Posterior vena cava (tissue), 2 donors: ENCODE measurements at regions of chr22 and their contacts with region 1.

Region 1: GRCh38 chr22:43600265-43600664 is 188.5 kb downstream of the MPPED1 start:
- DNase-seq: no peak

Region 2: GRCh38 chr22:45185718-45186514 is 1585.7 kb after region 1 on chr22:
- intact Hi-C with region 1: loop called in 1 of 2 experiments (anchors 5 kb)
- DNase-seq: no peak